ENCODE measurements at regions of chr16 and their contacts with region 1.

Region 1: GRCh38 chr16:88405216-88406060 is 22.7 kb downstream of the ZNF469 start:
- DNase-seq: no peak
- ATAC-seq: no peak
- H3K4me3 ChIP-seq: no peak overlapping the region
- H3K27ac ChIP-seq: no peak overlapping the region
- H3K4me1 ChIP-seq: no peaks in the 10 kb centered on the region
- H3K27me3 ChIP-seq: no peaks in the 10 kb centered on the region
- CTCF ChIP-seq: no peak

Region 2: GRCh38 chr16:88298833-88299745 is 106.3 kb before region 1 on chr16:
- CTCF ChIA-PET with region 1: no interaction called
- POLR2A ChIA-PET with region 1: no interaction called
- in situ Hi-C with region 1: loop called (anchors 10 kb)
- intact Hi-C with region 1: no loop called
- DNase-seq: no peak
- ATAC-seq: no peak
- H3K4me3 ChIP-seq: no peak overlapping the region
- H3K27ac ChIP-seq: no peak overlapping the region
- H3K4me1 ChIP-seq: no peaks in the 10 kb centered on the region
- H3K27me3 ChIP-seq: no peaks in the 10 kb centered on the region
- CTCF ChIP-seq: no peak

Region 3: GRCh38 chr16:88357306-88358022 is 48.0 kb before region 1 on chr16:
- CTCF ChIA-PET with region 1: no interaction called
- POLR2A ChIA-PET with region 1: no interaction called
- in situ Hi-C with region 1: no loop called
- intact Hi-C with region 1: no loop called
- DNase-seq: no peak
- ATAC-seq: no peak
- H3K4me3 ChIP-seq: no peak overlapping the region
- H3K27ac ChIP-seq: no peak overlapping the region
- H3K4me1 ChIP-seq: no peaks in the 10 kb centered on the region
- H3K27me3 ChIP-seq: no peaks in the 10 kb centered on the region
- CTCF ChIP-seq: no peak